ENCODE measurements at regions of chr10 and their contacts with region 1.

Region 1: GRCh38 chr10:110864662-110865140 is 7.0 kb upstream of the PDCD4 start:
- DNase-seq: peak; percentile 91
- H3K4me3 Mint-ChIP-seq: peak overlapping the region; percentile 79
- H3K27ac Mint-ChIP-seq: peak overlapping the region; percentile 97
- H3K4me1 Mint-ChIP-seq: peaks cover 82% of the 10 kb centered on the region
- H3K27me3 Mint-ChIP-seq: no peaks in the 10 kb centered on the region

Region 2: GRCh38 chr10:110076559-110077318 is 788.0 kb before region 1 on chr10:
- intact Hi-C with region 1: loop called (anchors 10 kb)
- DNase-seq: peak; percentile 82
- H3K4me3 Mint-ChIP-seq: peak overlapping the region; percentile 85
- H3K27ac Mint-ChIP-seq: peak overlapping the region; percentile 95
- H3K4me1 Mint-ChIP-seq: peaks cover 77% of the 10 kb centered on the region
- H3K27me3 Mint-ChIP-seq: no peaks in the 10 kb centered on the region

Region 3: DNA sequence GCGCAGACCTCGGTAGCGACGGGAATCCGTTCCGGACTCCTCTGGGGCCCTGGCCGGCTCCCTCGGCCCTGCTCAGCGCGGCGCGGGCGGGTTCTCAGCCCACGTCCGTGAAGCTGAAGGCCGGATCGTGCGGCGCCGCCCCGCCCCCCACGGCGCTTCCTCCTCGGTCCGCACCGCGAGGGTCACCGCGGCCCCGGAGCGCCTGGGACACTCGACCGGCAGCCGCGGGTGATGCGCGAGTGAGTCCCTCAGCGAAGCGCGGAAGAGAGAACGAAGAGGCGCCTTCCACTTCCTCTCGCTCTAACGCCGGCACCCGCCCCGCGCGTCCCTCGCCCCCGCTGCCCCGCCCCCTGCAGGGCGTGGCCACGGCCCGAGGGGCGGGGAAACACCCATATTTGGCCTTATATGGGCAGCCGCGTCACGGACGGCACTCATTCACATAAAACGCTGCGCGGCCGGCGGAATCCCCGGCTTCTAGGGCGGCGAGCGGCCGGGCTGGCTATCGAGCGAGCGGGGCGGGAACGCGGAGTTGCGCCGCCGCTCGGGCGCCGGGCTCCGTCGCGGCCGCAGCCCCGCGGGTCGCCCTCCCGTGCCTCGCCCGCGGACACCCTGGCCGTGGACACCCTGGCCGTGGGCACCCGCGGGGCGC is 367.1 kb before region 1 on chr10 and contains the start of gene DUSP5:
- intact Hi-C with region 1: loop called (anchors 10 kb)
- DNase-seq: peak; percentile 99
- H3K4me3 Mint-ChIP-seq: peak within 1 kb of the TSS; percentile 99
- H3K27ac Mint-ChIP-seq: peak within 1 kb of the TSS; percentile 92
- H3K4me1 Mint-ChIP-seq: peaks cover 47% of the 10 kb centered on the region
- H3K27me3 Mint-ChIP-seq: no peaks in the 10 kb centered on the region
- total RNA-seq, gene DUSP5: 76.0 and 79.9 TPM in 2 replicates

Region 4: GRCh38 chr10:110803830-110804338 is 60.8 kb before region 1 on chr10:
- intact Hi-C with region 1: loop called (anchors 2 kb)
- DNase-seq: peak; percentile 72
- H3K4me3 Mint-ChIP-seq: peak overlapping the region; percentile 23
- H3K27ac Mint-ChIP-seq: peak overlapping the region; percentile 17
- H3K4me1 Mint-ChIP-seq: peaks cover 38% of the 10 kb centered on the region
- H3K27me3 Mint-ChIP-seq: no peaks in the 10 kb centered on the region

Region 5: DNA sequence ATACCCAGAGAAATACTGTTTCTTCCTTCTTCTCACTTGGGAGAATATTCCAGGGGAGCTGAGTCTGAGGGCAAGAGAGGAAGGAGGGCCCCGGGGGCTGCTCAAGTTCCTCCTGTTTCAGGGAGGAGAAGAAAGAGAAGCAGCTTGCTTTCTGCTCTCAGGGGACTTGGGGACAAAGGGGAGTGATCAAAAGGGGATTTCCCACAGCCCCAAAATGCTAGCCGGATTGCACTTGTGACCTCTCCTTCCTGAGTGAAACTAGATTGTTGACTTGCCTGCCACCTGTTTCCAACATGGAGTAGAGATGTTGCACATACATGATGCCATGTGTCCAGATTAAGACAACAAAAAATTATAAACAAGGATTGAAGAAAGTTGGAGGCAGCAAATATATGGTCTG is 21.7 kb before region 1 on chr10:
- intact Hi-C with region 1: loop called (anchors 1 kb)
- DNase-seq: peak; percentile 90
- H3K4me3 Mint-ChIP-seq: peak overlapping the region; percentile 30
- H3K27ac Mint-ChIP-seq: peak overlapping the region; percentile 82
- H3K4me1 Mint-ChIP-seq: peaks cover 49% of the 10 kb centered on the region
- H3K27me3 Mint-ChIP-seq: no peaks in the 10 kb centered on the region

Region 6: GRCh38 chr10:111954386-111954785 is 1089.7 kb after region 1 on chr10:
- intact Hi-C with region 1: no loop called
- DNase-seq: no peak
- H3K4me3 Mint-ChIP-seq: no peak overlapping the region
- H3K27ac Mint-ChIP-seq: no peak overlapping the region
- H3K4me1 Mint-ChIP-seq: no peaks in the 10 kb centered on the region
- H3K27me3 Mint-ChIP-seq: no peaks in the 10 kb centered on the region

Measured in activated CD4-positive, alpha-beta T cell treated with anti-CD3 and anti-CD28 coated beads, Interleukin-2, amount 10 ng/mL, durations not matched to agents 24 days and 14 days (primary cell).